PC-3 (cell line): ENCODE measurements at regions of chr13 and their contacts with region 1.

Region 1: GRCh38 chr13:95301183-95301967 is at the start of gene ABCC4:
- DNase-seq: peak; percentile 75
- ATAC-seq: peak; percentile 71
- H3K4me3 ChIP-seq: peak within 1 kb of the TSS; percentile 85
- H3K27ac ChIP-seq: peak within 1 kb of the TSS; percentile 59
- H3K4me1 ChIP-seq: peaks cover 30% of the 10 kb centered on the region
- H3K27me3 ChIP-seq: no peaks in the 10 kb centered on the region
- CTCF ChIP-seq: no peak
- total RNA-seq, gene ABCC4: 17.7 and 18.9 TPM in 2 replicates

Region 2: GRCh38 chr13:95185851-95186250 is 115.5 kb before region 1 on chr13:
- CTCF ChIA-PET with region 1: interaction called, 4 read pairs
- POLR2A ChIA-PET with region 1: no interaction called
- intact Hi-C with region 1: loop called (anchors 2 kb)
- DNase-seq: no peak
- ATAC-seq: no peak
- H3K4me3 ChIP-seq: no peak overlapping the region
- H3K27ac ChIP-seq: no peak overlapping the region
- H3K4me1 ChIP-seq: no peaks in the 10 kb centered on the region
- H3K27me3 ChIP-seq: no peaks in the 10 kb centered on the region
- CTCF ChIP-seq: no peak

Region 3: DNA sequence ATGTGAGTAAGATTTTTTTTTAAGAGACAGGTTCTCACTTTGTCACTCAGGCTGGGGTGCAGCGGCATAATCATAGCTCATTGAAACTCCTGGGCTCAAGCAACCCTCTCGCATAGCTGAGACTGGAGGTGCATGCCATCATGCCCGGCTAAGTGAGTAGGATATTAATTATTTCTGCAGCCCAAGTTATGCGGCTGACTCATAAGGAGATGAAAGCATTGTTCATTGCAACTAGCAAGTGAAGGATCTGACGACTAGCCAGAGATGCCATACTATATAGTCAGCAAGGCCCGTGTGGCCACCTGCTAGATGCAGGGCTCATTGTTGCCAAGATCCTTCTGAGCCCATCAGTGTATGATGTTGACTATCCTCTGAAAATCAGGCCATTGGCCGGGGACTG is 45.3 kb before region 1 on chr13:
- CTCF ChIA-PET with region 1: no interaction called
- POLR2A ChIA-PET with region 1: no interaction called
- intact Hi-C with region 1: loop called (anchors 5 kb)
- DNase-seq: peak; percentile 94
- ATAC-seq: peak; percentile 97
- H3K4me3 ChIP-seq: no peak overlapping the region
- H3K27ac ChIP-seq: peak overlapping the region; percentile 45
- H3K4me1 ChIP-seq: peaks cover 34% of the 10 kb centered on the region
- H3K27me3 ChIP-seq: no peaks in the 10 kb centered on the region
- CTCF ChIP-seq: no peak

Region 4: GRCh38 chr13:95378603-95379002 is 77.2 kb after region 1 on chr13:
- CTCF ChIA-PET with region 1: interaction called, 9 read pairs
- POLR2A ChIA-PET with region 1: no interaction called
- intact Hi-C with region 1: loop called (anchors 1 kb)
- DNase-seq: peak; percentile 4
- ATAC-seq: no peak
- H3K4me3 ChIP-seq: no peak overlapping the region
- H3K27ac ChIP-seq: no peak overlapping the region
- H3K4me1 ChIP-seq: peaks cover 4% of the 10 kb centered on the region; the same call in 1 of the 2 replicates
- H3K27me3 ChIP-seq: no peaks in the 10 kb centered on the region
- CTCF ChIP-seq: no peak

Region 5: DNA sequence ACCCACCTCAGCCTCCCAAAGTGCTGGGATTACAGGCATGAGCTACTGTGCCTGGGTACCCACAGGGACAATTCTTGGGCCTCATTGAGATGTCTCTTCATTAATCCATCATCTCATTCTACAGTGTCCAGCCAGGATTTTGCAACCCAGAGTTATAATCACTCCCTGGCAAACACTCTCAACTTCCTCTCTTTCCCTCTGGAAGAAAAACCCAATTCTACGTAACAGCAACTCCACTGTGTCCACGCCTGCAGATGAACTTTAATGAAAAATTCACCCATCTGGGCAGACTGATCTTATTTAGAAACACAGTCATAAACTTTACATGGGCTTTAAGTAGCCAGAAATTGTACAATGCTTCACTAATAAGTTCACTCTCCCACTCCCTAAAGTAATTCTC is 90.0 kb after region 1 on chr13:
- CTCF ChIA-PET with region 1: no interaction called
- POLR2A ChIA-PET with region 1: no interaction called
- intact Hi-C with region 1: no loop called
- DNase-seq: no peak
- ATAC-seq: no peak
- H3K4me3 ChIP-seq: no peak overlapping the region
- H3K27ac ChIP-seq: no peak overlapping the region
- H3K4me1 ChIP-seq: no peaks in the 10 kb centered on the region
- H3K27me3 ChIP-seq: no peaks in the 10 kb centered on the region
- CTCF ChIP-seq: no peak

Region 6: DNA sequence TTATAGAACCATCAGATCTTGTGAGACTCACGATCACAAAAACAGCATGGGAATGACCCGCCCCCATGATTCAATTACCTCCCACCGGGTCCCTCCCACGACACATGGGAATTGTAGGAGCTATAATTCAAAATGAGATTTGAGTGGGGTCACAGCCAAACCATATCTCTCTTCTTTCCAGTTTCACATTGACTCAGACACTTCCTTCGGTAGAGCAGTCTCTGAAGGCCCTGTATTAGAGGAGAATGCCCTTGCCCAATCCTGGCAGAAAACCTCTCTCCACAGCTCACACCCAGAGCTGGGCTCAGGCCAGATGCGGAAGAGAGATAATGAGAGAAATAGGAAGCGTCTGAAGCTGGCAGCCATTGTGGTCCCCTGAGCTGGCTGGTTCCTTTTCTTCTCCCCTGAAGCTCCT is 178.8 kb after region 1 on chr13:
- CTCF ChIA-PET with region 1: no interaction called
- POLR2A ChIA-PET with region 1: no interaction called
- intact Hi-C with region 1: loop called (anchors 5 kb)
- DNase-seq: no peak
- ATAC-seq: no peak
- H3K4me3 ChIP-seq: no peak overlapping the region
- H3K27ac ChIP-seq: no peak overlapping the region
- H3K4me1 ChIP-seq: peaks cover 16% of the 10 kb centered on the region
- H3K27me3 ChIP-seq: no peaks in the 10 kb centered on the region
- CTCF ChIP-seq: no peak